Activated naive CD4-positive, alpha-beta T cell treated with anti-CD3 and anti-CD28 coated beads for 36 hours (primary cell): ENCODE measurements at regions of chr2 and their contacts with region 1.

Region 1: DNA sequence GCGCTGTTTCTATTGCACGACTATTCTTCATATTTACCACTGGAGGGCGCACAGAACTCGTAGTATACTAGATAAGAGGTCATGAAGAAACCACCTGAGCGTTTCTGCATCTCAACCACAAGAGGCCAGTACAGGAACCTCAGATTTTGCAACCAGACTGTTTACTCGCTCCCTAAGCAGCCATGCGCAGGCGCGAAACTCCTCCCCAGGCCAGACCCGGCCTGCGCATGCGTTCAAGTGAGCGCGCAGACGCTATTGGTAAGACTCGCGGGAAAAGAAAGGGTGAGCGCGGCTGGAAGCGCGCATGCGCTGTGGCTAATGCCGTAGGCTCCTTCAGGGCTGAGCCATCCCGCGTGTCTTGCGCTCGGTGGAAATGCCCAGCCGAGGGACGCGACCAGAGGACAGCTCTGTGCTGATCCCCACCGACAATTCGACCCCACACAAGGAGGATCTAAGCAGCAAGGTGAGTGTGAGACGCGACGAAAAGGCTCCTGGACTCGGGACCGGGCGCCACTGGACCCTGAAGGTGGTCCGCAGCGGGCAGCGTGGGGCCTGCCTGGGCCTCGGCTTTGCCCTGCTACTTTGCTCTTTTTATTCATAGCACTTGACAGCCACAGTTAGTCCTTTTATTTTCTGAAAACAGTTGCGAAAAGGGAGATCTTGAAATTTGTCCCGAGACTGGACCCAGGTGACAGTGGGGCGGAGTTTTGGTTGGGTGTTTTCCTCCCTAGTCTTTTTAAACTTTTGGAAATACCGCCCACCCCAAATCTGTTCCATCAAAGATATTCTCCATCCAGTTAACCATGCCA is at the start of gene ASNSD1:
- DNase-seq: peak; percentile 98
- H3K4me3 Mint-ChIP-seq: no peak within 1 kb of the TSS
- H3K27ac Mint-ChIP-seq: no peak within 1 kb of the TSS
- H3K4me1 Mint-ChIP-seq: peaks cover 52% of the 10 kb centered on the region
- H3K27me3 Mint-ChIP-seq: no peaks in the 10 kb centered on the region
- total RNA-seq, gene ASNSD1: 35.4 to 38.2 TPM

Region 2: DNA sequence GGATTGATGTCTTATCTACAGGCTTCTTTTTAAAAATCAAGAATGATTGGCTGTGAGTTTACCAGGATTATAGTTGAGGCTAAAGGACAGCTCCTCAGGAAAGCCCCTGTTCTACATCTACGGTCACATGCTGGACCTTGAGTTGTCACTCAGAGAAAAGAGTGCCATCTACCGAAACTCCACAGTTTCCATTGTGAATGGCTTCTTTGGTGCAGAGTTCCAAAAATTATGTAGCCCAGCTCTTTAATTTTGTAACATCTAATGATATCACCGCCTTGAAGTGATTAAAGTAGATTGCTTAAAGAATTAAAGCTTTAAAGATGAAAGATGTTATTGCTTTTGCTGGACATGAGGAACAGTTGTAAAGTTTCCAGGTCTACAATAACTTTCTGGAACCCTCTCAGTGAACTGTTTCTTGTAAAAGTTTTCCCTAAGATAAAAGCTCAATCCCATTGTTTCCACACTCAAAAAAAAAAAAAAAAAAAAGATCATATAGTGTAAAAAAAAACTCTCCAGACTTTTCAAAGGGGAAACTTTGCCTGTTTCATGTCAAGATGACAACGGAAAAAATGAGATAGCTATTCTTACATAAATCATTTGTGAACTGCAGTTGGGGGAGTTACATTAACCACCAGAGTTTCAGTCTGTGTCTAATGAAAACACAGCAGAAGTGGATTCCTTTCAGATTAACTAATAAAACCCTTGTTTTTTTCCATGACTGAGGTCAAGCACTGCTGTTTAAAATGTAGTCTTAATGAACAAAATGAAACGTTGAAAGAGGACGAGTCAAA is 682.9 kb before region 1 on chr2:
- CTCF ChIA-PET with region 1: no interaction called
- intact Hi-C with region 1: loop called (anchors 10 kb)
- DNase-seq: peak; percentile 6
- H3K4me3 Mint-ChIP-seq: peak overlapping the region; percentile 7
- H3K27ac Mint-ChIP-seq: peak overlapping the region; percentile 51
- H3K4me1 Mint-ChIP-seq: peaks cover 19% of the 10 kb centered on the region
- H3K27me3 Mint-ChIP-seq: peaks cover 19% of the 10 kb centered on the region

Region 3: GRCh38 chr2:189641590-189641989 is 19.8 kb before region 1 on chr2:
- CTCF ChIA-PET with region 1: interaction called, 5 read pairs
- intact Hi-C with region 1: loop called (anchors 1 kb)
- DNase-seq: peak; percentile 71
- H3K4me3 Mint-ChIP-seq: no peak overlapping the region
- H3K27ac Mint-ChIP-seq: peak overlapping the region; percentile 10
- H3K4me1 Mint-ChIP-seq: peaks cover 25% of the 10 kb centered on the region
- H3K27me3 Mint-ChIP-seq: no peaks in the 10 kb centered on the region

Region 4: GRCh38 chr2:189698020-189698887 is 36.9 kb after region 1 on chr2:
- CTCF ChIA-PET with region 1: interaction called, 83 read pairs
- intact Hi-C with region 1: loop called (anchors 1 kb)
- DNase-seq: peak; percentile 59
- H3K4me3 Mint-ChIP-seq: peak overlapping the region; percentile 25
- H3K27ac Mint-ChIP-seq: no peak overlapping the region
- H3K4me1 Mint-ChIP-seq: no peaks in the 10 kb centered on the region
- H3K27me3 Mint-ChIP-seq: no peaks in the 10 kb centered on the region

Region 5: DNA sequence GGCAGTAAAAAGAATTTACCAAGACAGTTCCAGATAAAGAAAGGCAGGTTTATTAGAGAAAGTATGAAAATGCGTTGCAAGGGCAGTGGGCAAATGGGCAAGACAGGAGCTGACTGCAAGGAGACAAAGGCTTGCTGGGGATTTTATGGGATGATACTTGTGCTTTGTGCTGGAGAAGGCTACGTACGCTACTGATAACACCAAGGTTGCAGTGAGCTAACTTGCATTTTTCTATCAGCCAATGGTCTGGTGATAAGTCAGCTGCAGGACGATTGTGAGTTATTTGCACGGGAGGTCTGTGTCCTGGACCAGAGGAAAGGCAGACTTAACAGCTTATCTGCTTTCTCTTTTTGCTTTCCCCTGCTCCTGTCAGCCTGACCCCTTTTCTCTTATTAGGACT is 239.4 kb after region 1 on chr2:
- CTCF ChIA-PET with region 1: no interaction called
- intact Hi-C with region 1: no loop called
- DNase-seq: no peak
- H3K4me3 Mint-ChIP-seq: no peak overlapping the region
- H3K27ac Mint-ChIP-seq: no peak overlapping the region
- H3K4me1 Mint-ChIP-seq: no peaks in the 10 kb centered on the region
- H3K27me3 Mint-ChIP-seq: peaks cover 6% of the 10 kb centered on the region

Region 6: GRCh38 chr2:190023861-190024260 is 362.5 kb after region 1 on chr2:
- CTCF ChIA-PET with region 1: no interaction called
- intact Hi-C with region 1: loop called (anchors 2 kb)
- DNase-seq: no peak
- H3K4me3 Mint-ChIP-seq: no peak overlapping the region
- H3K27ac Mint-ChIP-seq: no peak overlapping the region
- H3K4me1 Mint-ChIP-seq: no peaks in the 10 kb centered on the region
- H3K27me3 Mint-ChIP-seq: peaks cover 15% of the 10 kb centered on the region

Region 7: DNA sequence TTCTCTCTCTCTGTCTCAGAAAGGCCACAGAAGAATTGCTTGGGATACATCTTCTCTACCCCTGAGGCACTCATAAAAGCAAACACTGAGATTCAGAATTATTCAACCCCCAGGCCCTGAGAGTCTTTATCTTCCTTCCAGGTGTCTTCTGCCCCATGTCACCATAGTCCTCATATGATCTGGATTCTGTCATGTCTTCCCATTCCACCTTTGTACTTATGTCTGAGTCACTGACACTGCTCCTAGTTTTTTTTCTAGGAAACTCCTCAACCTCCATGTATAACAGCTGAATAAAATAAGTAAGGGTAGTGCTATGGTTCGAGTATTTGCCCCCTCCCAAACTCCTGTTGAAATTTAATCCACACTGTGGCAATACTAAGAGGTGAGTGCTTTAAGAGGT is 646.7 kb after region 1 on chr2:
- CTCF ChIA-PET with region 1: no interaction called
- intact Hi-C with region 1: no loop called
- DNase-seq: no peak
- H3K4me3 Mint-ChIP-seq: no peak overlapping the region
- H3K27ac Mint-ChIP-seq: no peak overlapping the region
- H3K4me1 Mint-ChIP-seq: peaks cover 5% of the 10 kb centered on the region
- H3K27me3 Mint-ChIP-seq: no peaks in the 10 kb centered on the region

Region 8: GRCh38 chr2:190376591-190377245 is 715.4 kb after region 1 on chr2:
- CTCF ChIA-PET with region 1: no interaction called
- intact Hi-C with region 1: loop called (anchors 1 kb)
- DNase-seq: no peak
- H3K4me3 Mint-ChIP-seq: no peak overlapping the region
- H3K27ac Mint-ChIP-seq: no peak overlapping the region
- H3K4me1 Mint-ChIP-seq: no peaks in the 10 kb centered on the region
- H3K27me3 Mint-ChIP-seq: no peaks in the 10 kb centered on the region

Region 9: GRCh38 chr2:191020221-191020741 is 1358.9 kb after region 1 on chr2:
- CTCF ChIA-PET with region 1: no interaction called
- intact Hi-C with region 1: loop called (anchors 5 kb)
- DNase-seq: peak; percentile 93
- H3K4me3 Mint-ChIP-seq: no peak overlapping the region
- H3K27ac Mint-ChIP-seq: no peak overlapping the region
- H3K4me1 Mint-ChIP-seq: peaks cover 36% of the 10 kb centered on the region
- H3K27me3 Mint-ChIP-seq: no peaks in the 10 kb centered on the region